ENCODE measurements at regions of chr19 and their contacts with region 1.

Region 1: DNA sequence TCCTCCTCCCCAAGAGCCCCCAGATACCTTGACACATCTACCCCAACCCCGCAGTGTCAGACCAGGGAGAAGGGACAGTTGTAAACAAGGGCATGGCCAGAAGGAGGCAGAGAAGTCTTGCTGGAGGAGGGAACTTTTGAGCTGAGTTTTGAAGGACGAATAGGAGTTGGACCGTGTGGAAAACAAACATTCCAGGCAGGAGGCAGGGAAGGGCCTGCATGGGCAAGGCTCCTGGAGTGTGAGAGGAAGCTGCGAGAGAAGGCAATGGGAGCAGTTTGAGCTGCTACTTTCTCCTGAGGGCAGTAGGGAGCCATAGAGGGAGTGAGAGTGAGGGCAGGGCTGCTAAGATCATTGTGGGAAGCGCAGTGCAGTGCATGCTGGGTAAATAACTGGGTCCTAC is 23.3 kb downstream of the IL12RB1 start:
- DNase-seq: no peak

Region 2: DNA sequence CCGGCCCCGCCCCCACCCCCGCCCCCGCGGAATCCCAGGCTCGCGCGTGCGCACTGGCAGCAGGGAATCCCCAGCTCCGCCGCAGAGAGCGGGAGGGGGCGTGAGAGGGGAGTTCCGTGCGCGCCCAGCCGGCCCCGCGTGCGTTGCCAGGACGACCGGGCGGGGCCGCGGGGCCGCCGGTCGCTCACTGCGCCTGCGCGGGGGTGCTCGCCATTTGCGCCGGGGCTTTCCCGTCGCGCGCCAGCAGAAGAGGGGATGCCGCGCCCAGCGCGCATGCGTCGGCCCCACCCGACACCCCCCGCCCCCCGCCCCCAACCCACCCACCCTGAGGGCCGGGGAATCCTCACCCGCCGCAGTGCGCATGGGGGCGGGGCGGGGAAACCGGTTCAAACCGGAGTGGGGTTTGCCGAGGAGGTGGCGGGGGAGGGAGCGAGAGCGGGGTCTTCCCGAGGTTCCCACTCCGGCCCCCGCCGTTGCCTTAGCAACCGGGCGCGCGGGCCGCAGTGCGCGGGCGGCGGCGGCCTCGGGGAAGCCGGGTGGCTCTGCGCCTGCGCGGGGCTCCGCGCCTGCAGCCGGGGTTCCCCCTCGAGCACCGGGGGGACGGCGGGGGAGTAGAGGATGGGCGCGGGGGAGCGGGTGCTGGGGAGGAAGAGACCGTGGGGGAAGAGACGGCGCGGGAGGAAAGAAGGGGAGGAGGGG is 115.5 kb before region 1 on chr19:
- intact Hi-C with region 1: loop called (anchors 10 kb)
- DNase-seq: peak; percentile 97

Region 3: DNA sequence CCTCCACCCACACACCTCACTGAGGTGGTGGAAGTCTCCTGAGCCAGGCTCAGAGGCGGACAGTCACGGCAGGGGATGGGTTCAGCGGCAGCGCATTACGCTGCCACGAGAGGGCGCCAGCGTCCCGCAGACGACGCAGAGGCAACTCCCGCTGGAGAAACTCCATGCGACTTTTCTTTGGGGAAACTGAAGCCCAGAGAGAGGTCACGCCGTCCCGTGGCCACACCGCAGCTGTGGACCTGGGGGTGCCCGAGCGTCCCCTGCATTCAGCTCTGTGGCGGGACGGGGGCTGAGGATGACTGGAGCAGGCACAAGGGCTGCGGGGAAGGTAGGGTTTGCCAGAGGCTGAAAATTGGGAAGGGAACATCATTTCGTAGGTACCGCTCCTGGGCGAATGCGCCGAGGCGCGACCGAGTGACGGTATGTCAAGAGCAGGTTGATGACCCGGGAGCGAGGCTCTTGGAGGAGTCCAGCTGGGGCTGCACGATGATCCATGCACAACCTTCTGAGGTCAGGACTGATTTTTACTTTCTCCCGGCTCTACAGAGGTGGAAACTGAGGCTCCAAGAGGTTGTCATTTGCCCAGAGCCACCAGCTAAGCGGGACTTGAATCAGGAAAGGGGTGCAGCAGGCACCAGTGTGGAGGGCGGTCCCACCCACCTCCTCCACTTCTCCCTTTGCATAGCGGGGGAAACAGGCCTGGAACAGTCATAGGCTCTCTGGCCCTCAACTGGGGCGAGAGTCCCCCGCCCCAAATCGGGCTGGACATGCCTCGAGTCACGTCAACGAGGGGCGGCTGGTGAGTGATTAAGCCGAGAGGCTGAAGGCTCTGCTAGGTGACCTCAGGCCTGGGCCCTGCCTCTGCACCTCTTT is 56.2 kb before region 1 on chr19:
- intact Hi-C with region 1: loop called (anchors 2 kb)
- DNase-seq: peak; percentile 95

Region 4: DNA sequence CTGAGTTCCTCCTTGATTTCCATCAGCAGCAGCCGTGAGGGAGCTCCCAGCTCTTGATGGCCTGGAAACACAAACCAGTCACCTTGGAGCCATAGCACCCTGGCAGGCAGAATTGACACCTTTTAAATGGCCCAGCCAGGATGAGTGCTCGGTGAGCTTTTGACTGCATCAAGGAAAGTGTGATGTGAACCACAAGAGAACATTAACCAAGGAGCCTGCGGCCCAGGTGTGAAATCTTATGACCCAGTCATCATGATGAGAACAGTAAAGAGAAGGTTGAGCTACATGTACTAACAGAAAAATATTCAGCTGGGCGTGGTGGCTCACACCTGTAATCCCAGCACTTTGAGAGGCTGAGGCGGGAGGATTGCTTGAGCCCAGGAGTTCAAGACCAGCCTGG is 947.1 kb after region 1 on chr19:
- intact Hi-C with region 1: no loop called
- DNase-seq: no peak

Measured in posterior vena cava (tissue), 2 donors.